GM18951 (cell line): ENCODE measurements at regions of chr3 and their contacts with region 1.

Region 1: DNA sequence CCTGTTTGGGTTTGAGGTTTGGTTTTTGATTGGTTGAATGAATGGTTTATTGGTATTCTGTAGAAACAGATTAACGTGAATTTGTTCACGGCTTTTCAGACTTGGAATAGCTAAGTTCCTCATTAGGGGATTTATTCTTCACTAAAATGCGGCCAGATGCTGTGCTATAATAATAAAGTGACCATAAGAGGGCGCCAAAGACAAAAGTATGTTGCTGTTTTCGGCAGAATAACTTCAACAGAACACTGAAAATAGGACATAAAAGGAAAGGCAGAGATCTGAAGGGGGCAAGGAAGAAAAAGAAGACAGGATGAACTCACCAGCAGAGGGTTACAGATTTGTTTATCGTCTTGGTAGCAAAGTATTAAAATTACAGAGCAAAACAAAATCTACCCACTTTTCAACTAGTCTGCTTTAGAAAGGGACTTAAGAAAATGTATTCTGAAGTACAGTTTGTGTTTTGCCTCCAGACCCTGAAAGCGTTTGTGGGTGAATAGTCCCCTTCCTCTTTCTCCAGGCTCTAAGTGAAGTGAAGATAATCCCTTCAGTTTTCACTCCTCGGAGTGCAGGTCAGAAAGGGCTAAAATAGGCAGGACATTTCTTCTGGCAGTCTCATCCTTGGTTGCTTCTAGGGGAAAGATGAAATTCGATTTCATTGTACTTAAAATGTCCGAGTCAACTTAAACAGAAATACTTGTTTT is 147.6 kb downstream of the IL20RB start:
- POLR2A ChIP-seq: no peak

Region 2: DNA sequence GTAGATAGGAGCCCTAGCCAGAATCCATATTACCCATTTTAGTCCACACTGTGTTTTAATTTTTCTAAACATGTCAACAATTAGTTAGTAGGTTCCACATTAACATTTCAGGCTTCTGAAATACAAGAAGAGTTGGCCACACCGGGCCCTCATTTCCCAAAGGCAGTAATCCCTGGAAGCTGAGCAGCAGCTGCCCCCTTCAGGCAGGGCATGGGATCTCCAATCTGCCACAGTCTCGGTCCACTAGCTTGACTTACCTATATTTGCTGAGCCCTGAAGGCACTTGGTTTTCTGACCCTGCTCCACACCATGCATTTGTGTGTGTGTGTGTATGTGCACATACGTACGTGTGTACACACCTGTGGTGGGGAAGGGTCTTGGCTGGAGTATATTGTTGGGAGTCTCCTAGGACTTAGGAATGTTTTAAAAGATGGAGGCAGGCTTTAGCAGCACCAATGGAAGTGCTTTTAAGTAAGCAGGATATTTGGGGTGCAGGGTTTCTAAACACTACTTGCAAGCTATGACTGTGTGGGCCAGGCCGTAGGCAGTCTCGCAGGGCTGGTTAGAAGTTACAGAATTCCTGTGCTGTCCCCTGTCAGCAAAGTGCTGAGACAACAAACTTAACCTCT is 587.5 kb after region 1 on chr3:
- in situ Hi-C with region 1: loop called (anchors 25 kb)
- POLR2A ChIP-seq: no peak

Region 3: GRCh38 chr3:138068579-138069174 is 963.2 kb after region 1 on chr3:
- in situ Hi-C with region 1: loop called (anchors 25 kb)
- POLR2A ChIP-seq: no peak